Activated B cell treated with CpG ODN at 0.5 μM for 24 hours (primary cell): ENCODE measurements at regions of chr13 and their contacts with region 1.

Region 1: GRCh38 chr13:113153810-113154748 is 4.4 kb upstream of the PROZ start:
- DNase-seq: peak; percentile 50
- ATAC-seq: peak; percentile 85
- H3K4me3 Mint-ChIP-seq: peak overlapping the region; percentile 84
- H3K27ac Mint-ChIP-seq: peak overlapping the region; percentile 63
- H3K4me1 Mint-ChIP-seq: peaks cover 19% of the 10 kb centered on the region
- H3K27me3 Mint-ChIP-seq: peaks cover 12% of the 10 kb centered on the region
- CTCF ChIP-seq: no peak

Region 2: DNA sequence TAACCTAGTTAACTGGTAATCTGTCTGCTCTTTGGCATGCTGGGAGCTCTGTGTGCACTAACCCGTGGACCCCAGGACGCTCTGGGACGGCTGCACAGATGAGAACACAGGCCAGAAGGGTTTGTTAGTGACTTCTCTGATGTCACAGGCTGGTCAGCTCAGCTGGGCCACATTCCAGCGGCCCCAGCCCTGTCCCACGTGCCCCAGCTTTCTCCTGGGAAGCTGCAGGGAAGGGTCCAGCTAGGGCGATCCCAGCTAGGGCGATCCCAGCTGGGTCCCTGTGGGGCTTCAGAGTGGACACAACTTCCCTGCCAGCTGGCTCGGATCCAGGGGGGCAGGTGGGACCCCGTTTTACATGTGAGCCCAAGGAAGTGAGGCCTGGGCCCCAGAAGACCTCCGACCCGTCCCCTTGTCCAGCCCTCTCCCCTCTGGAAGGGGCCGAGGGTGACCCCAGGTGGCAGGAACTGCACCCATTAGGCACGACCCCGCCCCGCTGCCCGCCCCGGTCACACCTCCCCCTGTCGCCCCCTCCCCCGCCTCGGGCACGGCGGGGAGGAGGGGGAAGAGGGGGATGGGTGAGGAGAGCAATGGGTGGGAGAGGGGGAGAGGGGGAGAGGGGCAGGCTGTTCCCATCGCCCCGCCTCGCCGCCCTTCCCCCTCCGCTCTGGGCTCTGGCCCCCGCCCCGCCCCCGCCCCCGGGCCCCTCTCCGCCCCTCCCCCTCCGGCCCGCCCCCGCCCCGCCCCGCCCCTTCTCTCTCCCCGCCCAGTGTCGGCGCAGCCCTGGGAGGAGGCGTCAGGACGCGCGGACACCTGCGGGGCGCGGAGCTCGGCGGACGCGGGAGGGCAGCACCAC is 260.3 kb before region 1 on chr13:
- CTCF ChIA-PET with region 1: no interaction called
- POLR2A ChIA-PET with region 1: no interaction called
- intact Hi-C with region 1: loop called (anchors 5 kb)
- DNase-seq: no peak
- ATAC-seq: peak; percentile 80
- H3K4me3 Mint-ChIP-seq: peak overlapping the region; percentile 59
- H3K27ac Mint-ChIP-seq: no peak overlapping the region
- H3K4me1 Mint-ChIP-seq: peaks cover 22% of the 10 kb centered on the region
- H3K27me3 Mint-ChIP-seq: peaks cover 3% of the 10 kb centered on the region
- CTCF ChIP-seq: no peak

Region 3: GRCh38 chr13:113490496-113491417 is 336.7 kb after region 1 on chr13 and contains the start of gene DCUN1D2:
- CTCF ChIA-PET with region 1: no interaction called
- POLR2A ChIA-PET with region 1: no interaction called
- intact Hi-C with region 1: loop called (anchors 1 kb)
- DNase-seq: peak; percentile 91
- ATAC-seq: peak; percentile 90
- H3K4me3 Mint-ChIP-seq: peak within 1 kb of the TSS; percentile 90
- H3K27ac Mint-ChIP-seq: peak within 1 kb of the TSS; percentile 77
- H3K4me1 Mint-ChIP-seq: peaks cover 52% of the 10 kb centered on the region
- H3K27me3 Mint-ChIP-seq: no peaks in the 10 kb centered on the region
- CTCF ChIP-seq: no peak
- total RNA-seq, gene DCUN1D2: 19.8 and 26.2 TPM in 2 replicates